GM12878 (cell line): ENCODE measurements at regions of chr20 and their contacts with region 1.

Region 1: DNA sequence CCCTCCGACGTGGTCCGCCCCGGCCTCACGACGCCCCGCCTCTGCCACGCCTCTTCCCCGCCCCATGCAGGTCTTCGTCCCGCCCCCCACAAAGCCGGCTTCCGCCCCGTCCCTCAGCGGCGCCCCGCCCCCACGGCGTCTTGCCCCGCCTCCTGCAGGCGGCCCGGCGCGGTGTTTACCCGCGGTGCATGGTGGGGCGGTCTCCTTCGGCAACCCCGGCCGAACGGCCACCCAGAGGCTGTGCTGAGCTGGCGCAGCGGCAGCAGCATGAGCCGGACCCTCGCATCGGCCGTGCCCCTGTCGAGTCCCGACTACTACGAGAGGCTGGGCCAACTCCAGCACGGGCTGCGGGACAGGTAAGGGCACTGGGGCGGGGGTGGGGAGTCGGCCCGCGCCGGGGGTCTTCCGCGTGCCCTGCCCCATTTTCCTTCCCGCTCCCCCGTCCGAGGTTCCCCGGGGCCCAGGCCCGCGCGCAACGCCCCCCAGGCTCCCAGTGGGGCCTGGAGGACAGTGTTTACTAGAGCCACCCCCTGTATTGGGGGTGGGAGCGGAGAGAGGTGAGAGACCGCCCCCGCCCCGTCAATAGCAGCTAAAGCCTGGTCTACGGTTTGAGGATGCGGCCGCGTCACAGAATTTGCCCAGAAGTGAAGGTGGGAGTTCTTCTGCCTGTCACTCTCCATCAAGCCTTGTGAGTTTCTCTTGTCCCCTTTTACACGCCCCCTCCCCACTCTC is at the start of gene KIZ:
- DNase-seq: peak; percentile 77
- ATAC-seq: peak; percentile 99
- H3K4me3 ChIP-seq: peak within 1 kb of the TSS; percentile 75
- H3K27ac ChIP-seq: peak within 1 kb of the TSS; percentile 59
- H3K4me1 ChIP-seq: peaks cover 2% of the 10 kb centered on the region; the same call in 1 of the 2 replicates
- H3K27me3 ChIP-seq: no peaks in the 10 kb centered on the region
- CTCF ChIP-seq: peak; percentile 28 to 58 (median 38); a peak in 5 of 6 replicates
- EP300 ChIP-seq: no peak
- POLR2A ChIP-seq: peak; percentile 98
- RAD21 ChIP-seq: 0 out of 2 replicates have a peak, but pooled peaks have one; percentile 24
- polyA plus RNA-seq, gene KIZ: 2.7 to 4.5 TPM

Region 2: DNA sequence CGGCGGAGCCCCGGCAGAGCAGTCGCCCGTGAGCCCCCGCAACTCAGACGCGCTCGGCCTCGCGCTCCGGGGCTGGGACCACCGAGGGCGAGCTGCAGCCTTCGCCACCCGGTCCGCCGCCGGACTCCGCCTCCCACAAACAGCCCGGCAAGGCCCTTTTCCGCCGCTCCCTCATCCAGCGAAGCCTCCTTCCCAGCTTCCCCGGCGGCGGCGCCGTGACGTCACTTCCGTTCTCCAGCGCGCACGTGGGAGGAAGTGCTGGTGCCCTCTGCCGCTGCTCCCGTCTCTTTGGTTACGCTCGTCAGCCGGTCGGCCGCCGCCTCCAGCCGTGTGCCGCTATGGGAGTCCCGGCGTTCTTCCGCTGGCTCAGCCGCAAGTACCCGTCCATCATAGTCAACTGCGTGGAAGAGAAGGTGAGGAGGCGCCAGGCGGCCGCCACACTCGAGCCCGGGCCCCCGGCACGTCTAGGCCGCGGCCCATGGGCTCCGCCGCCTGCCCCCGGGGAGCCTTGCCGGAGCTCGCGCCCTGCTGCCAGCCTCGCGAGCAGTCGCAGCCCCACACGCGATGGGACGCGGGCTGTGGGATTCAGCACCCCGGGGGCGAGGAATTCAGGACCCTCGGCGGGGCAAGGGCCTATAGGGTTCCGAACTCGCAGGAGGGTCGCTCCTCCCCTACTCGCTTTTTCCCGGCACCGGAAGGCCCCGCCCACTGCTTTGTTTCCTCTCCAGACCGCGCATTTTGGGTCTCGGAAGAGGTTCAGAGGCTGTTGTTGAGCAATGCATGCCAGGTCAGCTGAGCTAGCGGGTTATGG is 177.3 kb after region 1 on chr20 and contains the start of gene XRN2:
- CTCF ChIA-PET with region 1: no interaction called
- POLR2A ChIA-PET with region 1: no interaction called
- RAD21 ChIA-PET with region 1: no interaction called
- SMC1A ChIA-PET with region 1: interaction called, 3 read pairs
- in situ Hi-C with region 1: no loop called
- intact Hi-C with region 1: loop called (anchors 10 kb)
- DNase-seq: peak; percentile 62
- ATAC-seq: peak; percentile 94
- H3K4me3 ChIP-seq: peak within 1 kb of the TSS; percentile 95
- H3K27ac ChIP-seq: peak within 1 kb of the TSS; percentile 90
- H3K4me1 ChIP-seq: no peaks in the 10 kb centered on the region
- H3K27me3 ChIP-seq: no peaks in the 10 kb centered on the region
- CTCF ChIP-seq: peak in 1 of 3 experiments; percentile 11; a peak in 1 of 6 replicates
- EP300 ChIP-seq: no peak
- POLR2A ChIP-seq: peak; percentile 97
- RAD21 ChIP-seq: no peak
- polyA plus RNA-seq, gene XRN2: 59.7 to 69.6 TPM